Transverse colon (tissue), 4 donors: ENCODE measurements at regions of chr2 and their contacts with region 1.

Region 1: DNA sequence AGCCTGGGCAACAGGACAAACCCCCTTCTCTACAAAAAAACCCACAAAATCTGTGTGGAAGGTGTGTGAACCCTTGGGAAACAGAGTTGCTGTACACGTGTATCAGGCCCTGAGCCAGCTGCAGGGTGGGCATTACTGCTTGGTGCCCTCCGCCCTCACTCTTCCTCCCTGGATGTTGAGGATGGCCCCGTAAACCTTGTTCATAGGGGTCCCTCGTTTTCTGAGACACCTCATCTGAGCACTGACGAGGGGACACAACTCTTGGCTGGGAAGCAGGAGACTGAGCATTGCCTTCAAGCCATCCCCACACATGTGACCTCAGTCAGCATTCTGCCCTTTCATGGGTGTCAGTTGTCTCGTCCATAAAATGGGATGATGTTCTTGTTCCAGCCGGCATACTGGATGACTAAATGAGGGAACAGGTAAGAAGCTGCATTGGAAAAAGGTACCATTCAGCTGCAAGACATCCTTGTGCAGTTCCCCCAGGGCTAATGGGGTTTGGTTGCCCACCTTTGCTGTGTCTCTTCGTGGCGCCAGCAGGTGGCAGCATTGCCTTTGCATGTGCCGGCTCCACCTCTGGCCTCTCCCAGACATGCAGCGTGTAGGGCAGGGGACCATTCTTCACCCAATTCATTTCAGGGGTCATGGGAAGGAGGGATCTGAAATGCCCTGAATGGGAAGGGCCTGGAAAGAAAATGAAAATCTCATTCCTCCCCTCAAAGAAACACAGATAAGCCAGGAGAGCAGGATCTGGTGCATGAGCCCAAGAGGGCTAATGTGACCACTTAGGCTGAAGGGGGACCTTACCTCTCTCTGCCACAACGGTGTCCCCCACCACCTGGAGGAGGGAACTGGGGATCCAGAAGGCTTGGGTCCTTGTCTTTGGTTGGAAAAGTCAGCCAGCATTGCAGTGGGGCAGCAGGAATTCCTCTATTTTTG is 36.4 kb upstream of the HAAO start:
- DNase-seq: peak; percentile 75
- H3K4me3 ChIP-seq: no peak overlapping the region
- H3K27ac ChIP-seq: peak overlapping the region in 3 of 4 donors; percentile 20 to 40 (median 34)
- H3K4me1 ChIP-seq: peaks cover 9 to 22% (median 17%) of the 10 kb centered on the region in 4 donors
- H3K27me3 ChIP-seq: no peaks in the 10 kb centered on the region
- CTCF ChIP-seq: peak; percentile 90 to 95 (median 92)
- EP300 ChIP-seq: no peak
- POLR2A ChIP-seq: no peak

Region 2: GRCh38 chr2:42754021-42754775 is 74.6 kb before region 1 on chr2:
- in situ Hi-C with region 1: no loop called
- intact Hi-C with region 1: no loop called
- DNase-seq: no peak
- H3K4me3 ChIP-seq: no peak overlapping the region
- H3K27ac ChIP-seq: no peak overlapping the region
- H3K4me1 ChIP-seq: peaks cover 0 to 8% (median 0%) of the 10 kb centered on the region in 4 donors
- H3K27me3 ChIP-seq: no peaks in the 10 kb centered on the region
- CTCF ChIP-seq: no peak
- EP300 ChIP-seq: no peak
- POLR2A ChIP-seq: no peak

Region 3: GRCh38 chr2:42903821-42904575 is 75.2 kb after region 1 on chr2:
- in situ Hi-C with region 1: no loop called
- intact Hi-C with region 1: no loop called
- DNase-seq: no peak
- H3K4me3 ChIP-seq: no peak overlapping the region
- H3K27ac ChIP-seq: peak overlapping the region in 2 of 4 donors; percentile 25 to 79
- H3K4me1 ChIP-seq: peaks cover 21 to 38% (median 33%) of the 10 kb centered on the region in 4 donors
- H3K27me3 ChIP-seq: no peaks in the 10 kb centered on the region
- CTCF ChIP-seq: no peak
- EP300 ChIP-seq: no peak
- POLR2A ChIP-seq: no peak

Region 4: GRCh38 chr2:42944779-42945415 is 116.1 kb after region 1 on chr2:
- in situ Hi-C with region 1: loop called in 2 of 4 experiments (anchors 25 kb)
- intact Hi-C with region 1: loop called (anchors 5 kb)
- DNase-seq: no peak
- H3K4me3 ChIP-seq: no peak overlapping the region
- H3K27ac ChIP-seq: no peak overlapping the region
- H3K4me1 ChIP-seq: peaks cover 0 to 10% (median 9%) of the 10 kb centered on the region in 4 donors
- H3K27me3 ChIP-seq: no peaks in the 10 kb centered on the region
- CTCF ChIP-seq: no peak
- EP300 ChIP-seq: no peak
- POLR2A ChIP-seq: no peak

Region 5: GRCh38 chr2:43239981-43240761 is 411.4 kb after region 1 on chr2:
- in situ Hi-C with region 1: loop called in 3 of 4 experiments (anchors 10 to 25 kb)
- intact Hi-C with region 1: no loop called
- DNase-seq: no peak
- H3K4me3 ChIP-seq: no peak overlapping the region
- H3K27ac ChIP-seq: peak overlapping the region; percentile 19 to 65 (median 44)
- H3K4me1 ChIP-seq: peaks cover 0 to 3% (median 0%) of the 10 kb centered on the region in 4 donors
- H3K27me3 ChIP-seq: no peaks in the 10 kb centered on the region
- CTCF ChIP-seq: no peak
- EP300 ChIP-seq: no peak
- POLR2A ChIP-seq: no peak

Region 6: GRCh38 chr2:43559391-43560230 is 730.9 kb after region 1 on chr2:
- in situ Hi-C with region 1: loop called in 2 of 4 experiments (anchors 25 kb)
- intact Hi-C with region 1: no loop called
- DNase-seq: no peak
- H3K4me3 ChIP-seq: no peak overlapping the region
- H3K27ac ChIP-seq: no peak overlapping the region
- H3K4me1 ChIP-seq: peaks cover 0 to 5% (median 0%) of the 10 kb centered on the region in 4 donors
- H3K27me3 ChIP-seq: no peaks in the 10 kb centered on the region
- CTCF ChIP-seq: no peak
- EP300 ChIP-seq: no peak
- POLR2A ChIP-seq: no peak